MCF 10A (cell line): ENCODE measurements at regions of chr10 and their contacts with region 1.

Region 1: DNA sequence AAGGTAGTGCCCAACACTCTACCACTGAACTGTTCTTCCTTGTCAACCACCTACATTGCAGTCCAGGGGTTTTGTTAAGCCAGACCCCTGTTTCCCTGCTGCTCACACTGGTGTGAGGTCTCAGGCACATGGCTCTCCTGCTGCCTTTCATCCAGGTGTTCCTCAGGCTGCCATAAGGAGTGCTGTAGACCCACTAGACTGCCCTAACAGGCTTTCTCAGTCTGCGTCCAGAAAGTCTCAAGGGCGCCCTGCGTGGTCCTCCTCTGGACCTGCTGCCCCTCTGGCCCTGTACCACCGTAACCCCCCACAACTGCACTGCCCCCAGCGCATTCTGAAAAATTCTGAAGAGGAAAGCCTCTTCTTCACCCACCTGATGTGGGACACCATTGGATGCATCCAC is 225.7 kb upstream of the ANKRD30A start:
- DNase-seq: no peak
- H3K4me3 Mint-ChIP-seq: no peak overlapping the region
- H3K27ac Mint-ChIP-seq: no peak overlapping the region
- H3K4me1 Mint-ChIP-seq: no peaks in the 10 kb centered on the region
- H3K27me3 Mint-ChIP-seq: peaks cover 11% of the 10 kb centered on the region
- CTCF ChIP-seq: no peak

Region 2: DNA sequence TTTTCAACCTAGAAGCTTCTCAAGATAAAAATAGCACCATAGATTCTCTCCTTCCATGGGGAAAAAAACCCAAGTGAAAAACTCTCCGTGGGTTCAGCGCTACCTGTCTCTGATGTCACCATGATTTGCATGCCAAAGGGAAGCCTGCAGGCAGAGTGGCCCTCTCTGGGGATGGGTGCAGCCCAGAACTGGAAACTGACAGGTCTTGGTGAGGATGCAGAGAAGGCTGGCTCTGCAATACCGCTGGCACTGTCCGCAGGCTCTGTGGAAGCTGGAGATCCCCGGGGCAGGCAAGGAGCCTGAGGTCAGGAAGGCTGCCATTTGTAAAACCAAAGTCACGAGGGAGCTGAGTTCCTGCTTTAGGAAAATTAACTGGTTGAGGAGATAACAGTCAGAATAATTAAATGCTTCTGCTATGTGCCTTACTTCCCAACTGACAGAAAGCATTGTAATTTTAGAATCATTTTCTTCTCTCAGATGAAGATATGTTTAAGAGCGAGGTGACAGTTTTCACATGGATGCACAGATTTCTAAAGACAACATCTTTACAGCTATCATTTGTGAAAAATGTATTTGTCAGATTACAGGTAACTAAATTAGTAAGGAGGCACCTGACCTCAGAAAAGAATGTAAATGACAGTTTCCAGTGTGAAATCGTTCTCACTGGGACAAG is 526.1 kb before region 1 on chr10:
- CTCF ChIA-PET with region 1: no interaction called
- POLR2A ChIA-PET with region 1: no interaction called
- intact Hi-C with region 1: no loop called
- DNase-seq: no peak
- H3K4me3 Mint-ChIP-seq: no peak overlapping the region
- H3K27ac Mint-ChIP-seq: no peak overlapping the region
- H3K4me1 Mint-ChIP-seq: no peaks in the 10 kb centered on the region
- H3K27me3 Mint-ChIP-seq: no peaks in the 10 kb centered on the region
- CTCF ChIP-seq: no peak

Region 3: GRCh38 chr10:36717118-36717517 is 182.5 kb before region 1 on chr10:
- CTCF ChIA-PET with region 1: no interaction called
- POLR2A ChIA-PET with region 1: no interaction called
- intact Hi-C with region 1: no loop called
- DNase-seq: no peak
- H3K4me3 Mint-ChIP-seq: no peak overlapping the region
- H3K27ac Mint-ChIP-seq: no peak overlapping the region
- H3K4me1 Mint-ChIP-seq: no peaks in the 10 kb centered on the region
- H3K27me3 Mint-ChIP-seq: no peaks in the 10 kb centered on the region
- CTCF ChIP-seq: no peak

Region 4: DNA sequence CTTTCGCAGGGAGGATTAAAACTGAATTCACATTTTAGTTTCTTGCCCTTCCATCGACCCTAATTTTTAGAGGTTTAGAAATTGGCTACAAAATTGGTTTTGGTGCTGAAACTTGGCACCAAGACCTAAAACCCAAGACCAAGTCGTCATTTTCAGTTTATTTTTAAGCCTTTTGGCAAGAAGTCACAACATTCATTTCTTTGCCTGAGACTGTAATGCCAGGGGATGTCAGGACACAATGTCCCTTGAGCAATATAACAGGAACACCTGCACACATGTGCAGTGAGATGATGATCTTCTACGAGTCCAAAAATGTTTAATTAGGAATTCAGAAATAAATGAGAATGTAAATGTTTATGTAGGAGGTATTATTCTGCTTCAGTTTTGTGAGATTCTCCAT is 109.7 kb before region 1 on chr10:
- CTCF ChIA-PET with region 1: no interaction called
- POLR2A ChIA-PET with region 1: no interaction called
- intact Hi-C with region 1: no loop called
- DNase-seq: no peak
- H3K4me3 Mint-ChIP-seq: no peak overlapping the region
- H3K27ac Mint-ChIP-seq: no peak overlapping the region
- H3K4me1 Mint-ChIP-seq: no peaks in the 10 kb centered on the region
- H3K27me3 Mint-ChIP-seq: no peaks in the 10 kb centered on the region
- CTCF ChIP-seq: no peak

Region 5: GRCh38 chr10:37263341-37263740 is 363.7 kb after region 1 on chr10:
- CTCF ChIA-PET with region 1: interaction called, 4 read pairs
- POLR2A ChIA-PET with region 1: no interaction called
- intact Hi-C with region 1: loop called (anchors 1 kb)
- DNase-seq: no peak
- H3K4me3 Mint-ChIP-seq: no peak overlapping the region
- H3K27ac Mint-ChIP-seq: no peak overlapping the region
- H3K4me1 Mint-ChIP-seq: no peaks in the 10 kb centered on the region
- H3K27me3 Mint-ChIP-seq: no peaks in the 10 kb centered on the region
- CTCF ChIP-seq: peak; percentile 32

Region 6: GRCh38 chr10:37488792-37489657 is 589.4 kb after region 1 on chr10:
- CTCF ChIA-PET with region 1: interaction called, 45 read pairs
- POLR2A ChIA-PET with region 1: no interaction called
- intact Hi-C with region 1: loop called (anchors 1 kb)
- DNase-seq: peak; percentile 25
- H3K4me3 Mint-ChIP-seq: peak overlapping the region; percentile 65
- H3K27ac Mint-ChIP-seq: peak overlapping the region; percentile 32
- H3K4me1 Mint-ChIP-seq: peaks cover 12% of the 10 kb centered on the region
- H3K27me3 Mint-ChIP-seq: no peaks in the 10 kb centered on the region
- CTCF ChIP-seq: no peak